Common myeloid progenitor, CD34-positive (primary cell): ENCODE measurements at regions of chr11 and their contacts with region 1.

Region 1: GRCh38 chr11:62905927-62906531 is 15.1 kb downstream of the CHRM1 start:
- DNase-seq: peak; percentile 75 to 81 (median 76)
- H3K4me3 ChIP-seq: no peak overlapping the region
- H3K27ac ChIP-seq: no peak overlapping the region
- H3K4me1 ChIP-seq: peaks cover 0 to 8% (median 3%) of the 10 kb centered on the region in 4 experiments
- H3K27me3 ChIP-seq: peaks cover 0 to 22% (median 0%) of the 10 kb centered on the region in 5 experiments

Region 2: GRCh38 chr11:62888406-62888805 is 17.6 kb before region 1 on chr11:
- CTCF ChIA-PET with region 1: interaction called, 14 read pairs
- POLR2A ChIA-PET with region 1: no interaction called
- DNase-seq: no peak
- H3K4me3 ChIP-seq: no peak overlapping the region
- H3K27ac ChIP-seq: no peak overlapping the region
- H3K4me1 ChIP-seq: peaks cover 0 to 21% (median 5%) of the 10 kb centered on the region in 4 experiments
- H3K27me3 ChIP-seq: no peaks in the 10 kb centered on the region

Region 3: DNA sequence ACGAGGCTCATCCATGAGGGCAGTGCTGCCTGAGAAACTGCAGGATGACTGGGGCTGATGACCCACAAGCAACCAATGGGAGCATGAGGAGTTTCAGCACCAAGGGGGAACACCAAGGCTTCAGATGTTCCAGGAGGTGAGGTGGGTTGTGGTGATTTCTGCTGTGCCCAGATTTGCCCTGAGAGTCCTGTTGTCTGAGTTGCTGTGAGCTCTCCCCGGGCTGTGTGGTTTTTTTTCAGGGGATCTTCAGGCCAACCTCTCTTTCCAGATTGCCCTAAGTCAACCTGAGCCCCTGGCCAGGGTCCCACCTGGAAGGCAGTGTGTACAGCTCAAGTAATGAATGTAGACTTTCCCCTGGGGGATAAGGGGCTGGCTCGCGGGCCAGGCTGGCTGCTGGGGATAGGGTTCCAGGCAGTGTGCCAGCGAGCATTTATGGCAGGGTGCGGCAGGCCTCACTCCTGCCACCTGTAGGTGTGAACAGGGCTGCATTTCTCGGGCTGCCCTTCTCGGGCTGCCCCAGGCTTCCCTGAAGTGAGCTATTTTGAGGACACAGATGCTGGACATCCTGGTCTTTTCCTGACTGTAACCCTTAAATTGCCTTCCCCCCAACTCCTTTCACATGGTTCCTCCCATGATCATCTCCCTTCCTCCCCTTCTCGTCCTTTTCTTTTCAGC is 69.0 kb after region 1 on chr11:
- CTCF ChIA-PET with region 1: interaction called, 30 read pairs
- POLR2A ChIA-PET with region 1: no interaction called
- DNase-seq: peak; percentile 16 to 54 (median 48)
- H3K4me3 ChIP-seq: no peak overlapping the region
- H3K27ac ChIP-seq: no peak overlapping the region
- H3K4me1 ChIP-seq: no peaks in the 10 kb centered on the region
- H3K27me3 ChIP-seq: peaks cover 0 to 18% (median 0%) of the 10 kb centered on the region in 5 experiments

Region 4: DNA sequence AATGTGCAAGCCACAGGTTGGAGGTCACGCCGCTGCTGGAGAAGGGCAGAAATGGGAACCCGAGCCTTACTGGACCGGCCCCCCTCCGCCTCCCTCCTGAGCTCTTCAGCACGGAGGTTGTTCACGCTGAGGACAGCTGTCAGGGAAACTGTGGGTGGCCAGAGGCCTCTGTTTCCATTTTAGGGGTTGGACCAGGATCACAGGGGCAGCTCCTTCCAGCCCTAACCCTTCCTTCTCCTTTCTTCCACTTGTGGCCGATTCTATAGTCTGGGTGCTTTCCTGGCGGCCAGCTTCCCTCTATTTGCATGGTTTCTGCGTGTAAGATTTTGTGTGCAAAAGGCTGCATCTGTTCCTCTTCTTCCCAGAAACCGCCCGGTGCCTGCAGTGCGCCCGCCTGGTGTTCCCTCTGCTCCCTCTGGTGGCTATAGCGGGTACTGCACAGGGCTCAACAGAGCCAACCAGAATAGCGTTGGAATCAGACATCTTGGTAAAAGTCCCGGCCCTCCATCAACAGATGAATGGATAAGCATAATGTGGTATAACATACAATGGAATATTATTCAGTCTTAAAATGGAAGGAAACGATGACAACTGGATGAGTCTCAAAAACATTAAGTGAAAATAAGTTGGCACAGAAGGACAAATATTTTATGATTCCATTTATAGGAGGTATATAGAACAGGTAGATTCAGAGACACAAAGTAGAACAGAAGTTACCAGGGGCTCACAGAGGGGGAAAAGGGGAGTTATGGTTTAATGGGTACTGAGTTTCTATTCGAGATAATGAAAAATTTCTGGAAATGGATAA is 118.0 kb after region 1 on chr11:
- CTCF ChIA-PET with region 1: interaction called, 200 read pairs
- POLR2A ChIA-PET with region 1: interaction called, 4 read pairs
- DNase-seq: peak; percentile 77 to 90 (median 87)
- H3K4me3 ChIP-seq: peak overlapping the region in 1 of 7 experiments; percentile 14
- H3K27ac ChIP-seq: no peak overlapping the region
- H3K4me1 ChIP-seq: peaks cover 0 to 7% (median 5%) of the 10 kb centered on the region in 4 experiments
- H3K27me3 ChIP-seq: peaks cover 0 to 7% (median under 1%) of the 10 kb centered on the region in 5 experiments

Region 5: DNA sequence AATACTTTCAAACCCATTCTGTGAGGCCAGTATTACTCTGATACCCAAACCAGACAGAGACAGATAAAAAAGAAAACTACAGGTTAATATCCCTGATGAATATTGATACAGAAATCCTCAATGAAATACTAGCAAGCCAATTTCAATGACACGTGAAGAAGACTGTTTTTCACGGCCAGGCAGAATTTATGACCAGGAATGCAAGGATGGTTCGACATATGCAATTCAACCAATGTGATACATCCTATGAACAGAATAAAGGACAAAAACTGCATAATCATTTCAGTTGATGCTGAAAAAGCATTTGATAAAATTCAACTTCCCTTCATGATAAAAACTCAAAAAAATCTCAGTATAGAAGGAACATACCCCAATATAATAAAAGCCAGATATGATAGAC is 193.5 kb after region 1 on chr11:
- CTCF ChIA-PET with region 1: no interaction called
- POLR2A ChIA-PET with region 1: no interaction called
- DNase-seq: peak; percentile 2 to 22 (median 11)
- H3K4me3 ChIP-seq: no peak overlapping the region
- H3K27ac ChIP-seq: no peak overlapping the region
- H3K4me1 ChIP-seq: no peaks in the 10 kb centered on the region
- H3K27me3 ChIP-seq: peaks cover 0 to 2% (median 0%) of the 10 kb centered on the region in 5 experiments

Region 6: GRCh38 chr11:63146581-63146980 is 240.6 kb after region 1 on chr11:
- CTCF ChIA-PET with region 1: no interaction called
- POLR2A ChIA-PET with region 1: no interaction called
- DNase-seq: no peak
- H3K4me3 ChIP-seq: no peak overlapping the region
- H3K27ac ChIP-seq: no peak overlapping the region
- H3K4me1 ChIP-seq: no peaks in the 10 kb centered on the region
- H3K27me3 ChIP-seq: peaks cover 0 to 4% (median 0%) of the 10 kb centered on the region in 5 experiments

Region 7: DNA sequence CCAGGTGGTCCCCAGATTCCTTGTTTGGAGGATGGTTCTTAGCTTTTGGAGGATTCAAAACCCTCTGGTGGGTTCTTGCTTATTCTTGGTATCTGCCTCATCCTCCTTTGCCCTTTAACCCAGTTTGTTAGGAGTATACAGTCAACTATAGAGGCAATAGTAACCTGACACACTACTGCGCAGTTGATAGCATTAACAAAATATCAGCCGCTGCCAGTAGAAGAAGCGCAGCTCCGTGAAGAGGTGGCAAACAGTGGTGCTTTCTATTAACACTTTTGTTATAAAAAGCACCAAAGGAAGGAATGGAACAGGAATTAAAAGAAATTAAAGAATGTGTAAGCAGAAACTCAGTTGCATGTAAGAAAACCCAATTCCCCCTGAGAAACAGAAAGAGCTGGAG is 308.1 kb after region 1 on chr11:
- CTCF ChIA-PET with region 1: interaction called, 10 read pairs
- POLR2A ChIA-PET with region 1: no interaction called
- DNase-seq: no peak
- H3K4me3 ChIP-seq: no peak overlapping the region
- H3K27ac ChIP-seq: no peak overlapping the region
- H3K4me1 ChIP-seq: peaks cover 0 to 19% (median 5%) of the 10 kb centered on the region in 4 experiments
- H3K27me3 ChIP-seq: peaks cover 0 to 4% (median 0%) of the 10 kb centered on the region in 5 experiments